ENCODE measurements at regions of chr22 and their contacts with region 1.

Region 1: DNA sequence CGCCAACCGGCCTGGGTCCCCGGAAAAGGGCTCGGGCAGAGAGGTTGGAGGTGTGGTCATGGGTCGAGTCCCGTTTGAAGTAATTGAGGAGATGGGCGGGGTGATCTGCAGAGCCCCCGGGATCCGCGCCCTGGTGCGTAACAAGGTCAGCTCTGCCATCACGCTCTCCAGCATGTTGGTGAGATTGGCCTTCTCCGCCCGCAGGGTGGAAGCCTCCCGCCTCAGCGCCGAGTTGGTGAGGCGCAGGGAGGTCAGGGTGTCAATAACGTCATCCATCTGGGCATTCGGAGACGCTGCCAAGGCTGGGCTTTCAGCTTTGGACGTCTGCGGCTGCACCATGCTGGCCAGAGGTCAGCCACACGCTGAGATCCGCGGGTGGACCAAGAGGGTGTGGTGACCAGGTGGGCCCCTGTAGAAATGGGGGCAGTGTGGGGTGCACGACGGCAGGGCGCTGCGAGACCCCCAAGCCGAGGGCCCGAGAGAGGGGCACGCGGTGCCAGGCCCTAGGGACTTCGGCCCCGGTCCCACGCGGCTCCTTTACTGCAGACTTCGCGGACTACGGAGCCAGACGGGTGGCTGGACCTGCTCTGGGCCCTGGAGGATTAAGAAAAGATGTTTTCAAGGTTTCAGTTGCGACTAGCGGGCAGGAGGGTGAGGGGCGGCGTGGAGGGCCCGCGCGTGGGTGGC is 672 bp downstream of the RTL6 start:
- DNase-seq: peak; percentile 67
- ATAC-seq: peak; percentile 43 to 70

Region 2: GRCh38 chr22:44363272-44363979 is 133.9 kb before region 1 on chr22:
- intact Hi-C with region 1: loop called in 1 of 2 experiments (anchors 10 kb)
- DNase-seq: peak; percentile 96
- ATAC-seq: peak; percentile 79 to 91

Region 3: DNA sequence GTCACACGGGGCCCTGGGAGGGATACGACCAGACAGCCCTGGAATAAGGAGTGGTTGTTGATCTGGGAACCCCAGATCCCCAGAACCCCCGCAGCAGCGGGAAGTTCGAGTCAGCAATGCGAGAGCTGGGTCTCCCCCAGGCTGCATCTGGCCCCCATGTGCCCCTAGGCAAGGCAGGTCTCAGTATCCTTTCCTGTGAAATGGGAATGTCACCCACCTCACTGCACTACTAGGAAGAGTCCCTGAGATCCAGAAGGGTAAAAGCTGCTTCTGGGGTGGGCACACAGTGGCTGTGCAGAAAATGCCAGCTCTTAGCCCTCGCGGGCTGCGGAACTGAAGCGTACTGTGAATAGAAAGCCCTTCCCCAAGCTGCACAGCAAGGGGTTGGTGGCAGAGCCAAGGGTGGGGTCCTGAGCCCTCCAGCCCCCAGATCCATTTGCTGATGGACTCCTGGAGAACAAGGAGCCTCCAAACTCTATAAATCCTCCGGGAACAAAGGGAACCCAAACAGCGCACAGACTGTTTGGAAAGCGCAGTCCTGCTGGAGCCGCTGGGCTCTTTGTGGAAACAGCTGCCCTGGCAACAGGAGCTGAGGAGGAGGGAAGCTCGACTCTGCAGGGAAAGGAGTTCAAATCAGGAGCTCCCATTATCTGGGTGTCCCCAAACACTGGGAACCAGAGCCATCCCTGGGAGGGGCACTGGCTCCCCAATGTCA is 116.4 kb before region 1 on chr22:
- intact Hi-C with region 1: no loop called
- DNase-seq: no peak
- ATAC-seq: peak in 1 of 2 donors; percentile 25

Region 4: DNA sequence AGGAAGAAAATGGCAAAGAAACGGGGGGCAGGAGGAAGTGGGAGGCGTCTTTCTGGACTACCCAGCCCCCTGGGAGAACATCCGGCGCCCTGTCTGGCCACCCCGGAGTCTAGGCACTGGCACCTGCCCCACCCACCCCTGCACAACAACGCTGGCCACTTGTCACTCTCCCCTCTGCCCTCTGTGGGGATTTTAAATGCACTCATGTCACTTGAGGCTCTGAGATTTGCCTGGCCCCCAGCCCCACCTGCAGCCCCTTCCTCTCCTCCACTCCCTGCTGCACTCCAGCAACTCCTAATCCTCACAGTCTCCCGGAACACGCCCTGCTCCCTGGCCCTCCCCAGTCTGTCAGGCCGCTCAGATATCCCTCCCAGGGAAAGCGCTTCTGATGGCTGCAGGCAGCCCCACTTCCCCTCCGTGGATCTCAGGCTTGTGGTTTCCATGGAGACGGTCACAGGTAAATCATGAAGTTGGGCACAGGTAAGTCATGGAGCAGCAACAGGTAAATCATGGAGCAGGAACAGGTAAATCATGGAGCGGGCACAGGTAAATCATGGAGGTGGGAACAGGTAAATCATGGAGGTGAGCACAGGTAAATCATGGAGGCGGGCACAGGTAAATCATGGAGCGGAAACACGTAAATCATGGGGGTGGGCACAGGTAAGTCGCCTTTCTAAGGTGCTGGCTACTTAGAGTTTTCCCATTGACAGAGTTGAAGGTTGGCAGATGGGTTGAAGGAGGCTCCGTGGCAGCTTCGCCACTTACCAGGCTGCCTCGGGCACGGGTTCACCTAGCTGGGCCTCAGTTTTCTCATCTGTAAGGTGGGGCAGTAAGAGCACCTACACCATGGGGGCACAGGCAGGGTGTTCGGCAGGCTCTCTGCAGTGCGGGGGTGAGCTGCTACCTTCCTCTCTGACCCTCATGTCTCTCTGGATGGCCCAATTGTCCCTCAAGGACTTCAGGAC is 105.6 kb before region 1 on chr22:
- intact Hi-C with region 1: no loop called
- DNase-seq: no peak
- ATAC-seq: no peak